ENCODE measurements at regions of chr2 and their contacts with region 1.

Region 1: DNA sequence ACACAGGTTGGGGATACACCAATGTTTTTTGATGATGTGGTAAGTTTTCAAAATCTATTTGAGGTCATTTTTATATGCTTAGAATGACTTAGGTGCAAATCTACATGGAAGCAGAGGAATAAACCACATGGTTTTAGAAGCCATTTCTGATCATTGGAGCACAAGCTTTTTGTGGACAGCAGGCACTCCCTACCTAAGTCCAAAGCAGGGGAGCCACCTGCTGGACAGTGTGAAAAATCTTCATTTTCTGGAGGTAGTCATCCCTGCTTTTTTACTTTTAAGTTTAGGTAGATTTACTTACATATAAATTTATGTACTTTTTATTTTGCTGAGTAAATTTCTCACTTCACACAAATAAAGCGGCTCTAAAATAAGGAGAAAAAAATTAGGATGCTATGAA is 323.2 kb downstream of the PLCL1 start:
- DNase-seq: peak; percentile 46
- H3K4me3 Mint-ChIP-seq: no peak overlapping the region
- H3K27ac Mint-ChIP-seq: no peak overlapping the region
- H3K4me1 Mint-ChIP-seq: no peaks in the 10 kb centered on the region
- H3K27me3 Mint-ChIP-seq: peaks cover 37% of the 10 kb centered on the region
- CTCF ChIP-seq: peak; percentile 45

Region 2: GRCh38 chr2:197851451-197851850 is 276.2 kb before region 1 on chr2:
- CTCF ChIA-PET with region 1: no interaction called
- intact Hi-C with region 1: loop called (anchors 5 kb)
- DNase-seq: no peak
- H3K4me3 Mint-ChIP-seq: no peak overlapping the region
- H3K27ac Mint-ChIP-seq: no peak overlapping the region
- H3K4me1 Mint-ChIP-seq: no peaks in the 10 kb centered on the region
- H3K27me3 Mint-ChIP-seq: no peaks in the 10 kb centered on the region
- CTCF ChIP-seq: no peak

Region 3: GRCh38 chr2:197915548-197916265 is 211.9 kb before region 1 on chr2:
- CTCF ChIA-PET with region 1: no interaction called
- intact Hi-C with region 1: no loop called
- DNase-seq: no peak
- H3K4me3 Mint-ChIP-seq: no peak overlapping the region
- H3K27ac Mint-ChIP-seq: no peak overlapping the region
- H3K4me1 Mint-ChIP-seq: no peaks in the 10 kb centered on the region
- H3K27me3 Mint-ChIP-seq: no peaks in the 10 kb centered on the region
- CTCF ChIP-seq: no peak

Region 4: DNA sequence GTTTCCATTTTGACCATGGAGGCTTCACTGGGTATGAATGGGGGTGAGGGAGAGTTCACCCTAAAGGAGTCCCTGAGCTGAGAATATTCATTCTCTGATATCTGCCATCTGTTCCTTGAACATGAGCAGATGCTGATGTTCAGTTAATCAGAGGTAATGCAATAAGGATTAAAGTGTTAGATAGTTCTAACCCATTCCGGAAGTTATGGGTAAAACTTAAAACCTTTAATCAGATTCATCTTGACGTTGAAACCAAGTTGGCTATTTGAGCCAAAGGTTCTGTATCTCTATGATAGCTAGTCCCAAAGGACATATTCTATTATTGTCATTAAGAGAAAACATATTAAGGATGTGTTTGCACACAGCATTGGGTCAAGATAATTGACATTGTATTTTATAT is 54.4 kb before region 1 on chr2:
- CTCF ChIA-PET with region 1: no interaction called
- intact Hi-C with region 1: no loop called
- DNase-seq: no peak
- H3K4me3 Mint-ChIP-seq: no peak overlapping the region
- H3K27ac Mint-ChIP-seq: no peak overlapping the region
- H3K4me1 Mint-ChIP-seq: no peaks in the 10 kb centered on the region
- H3K27me3 Mint-ChIP-seq: no peaks in the 10 kb centered on the region
- CTCF ChIP-seq: no peak